ENCODE measurements at regions of chr6 and their contacts with region 1.

Region 1: GRCh38 chr6:33118525-33119123 is 42.8 kb downstream of the HLA-DPB1 start:
- DNase-seq: peak in 1 of 2 experiments; percentile 59
- H3K4me3 ChIP-seq: peak overlapping the region; percentile 82 to 96 (median 92)
- H3K27ac ChIP-seq: peak overlapping the region; percentile 98
- H3K4me1 ChIP-seq: peaks cover 2 to 21% (median 9%) of the 10 kb centered on the region in 4 experiments; a peak in 6 of 7 replicates
- H3K27me3 ChIP-seq: no peaks in the 10 kb centered on the region
- CTCF ChIP-seq: peak in 2 of 3 experiments; percentile 26 to 69; a peak in 2 of 4 replicates
- EP300 ChIP-seq: no peak
- POLR2A ChIP-seq: 0 out of 3 replicates have a peak, but pooled peaks of 1 of the 2 experiments have one; percentile 17
- RAD21 ChIP-seq: peak; percentile 44

Region 2: GRCh38 chr6:33008944-33009861 is 109.4 kb before region 1 on chr6 and contains the start of gene HLA-DOA:
- CTCF ChIA-PET with region 1: interaction called, 20 read pairs
- POLR2A ChIA-PET with region 1: interaction called, 13 read pairs
- DNase-seq: peak; percentile 69 to 77
- H3K4me3 ChIP-seq: peak within 1 kb of the TSS; percentile 68 to 86 (median 74)
- H3K27ac ChIP-seq: peak within 1 kb of the TSS; percentile 22; the same call in 1 of the 2 replicates
- H3K4me1 ChIP-seq: peaks cover 5 to 10% (median 6%) of the 10 kb centered on the region in 4 experiments
- H3K27me3 ChIP-seq: no peaks in the 10 kb centered on the region
- CTCF ChIP-seq: no peak
- EP300 ChIP-seq: no peak
- POLR2A ChIP-seq: peak in 1 of 2 experiments; percentile 71; a peak in 2 of 3 replicates
- RAD21 ChIP-seq: no peak
- total RNA-seq, gene HLA-DOA: 23.7 TPM in 2 replicates

Region 3: DNA sequence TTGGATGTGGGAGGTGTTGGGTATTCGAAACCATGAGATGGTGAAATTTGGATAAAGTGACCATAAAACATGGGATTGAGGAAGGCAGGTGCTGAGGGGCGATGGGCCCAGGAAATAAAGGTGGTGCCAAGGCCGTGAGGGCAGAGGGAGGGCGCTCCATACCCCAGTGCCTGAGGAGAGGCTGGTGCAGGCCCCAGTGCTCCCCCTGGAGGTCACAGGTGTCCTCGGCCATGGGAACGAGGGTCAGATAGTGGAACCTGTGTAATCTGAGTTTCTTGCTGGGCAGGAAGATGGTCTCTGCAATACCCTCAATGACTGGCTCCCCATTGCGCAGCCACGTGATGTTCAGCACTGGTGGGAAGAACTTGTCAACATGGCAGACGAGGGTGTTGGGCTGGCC is 26.7 kb before region 1 on chr6:
- CTCF ChIA-PET with region 1: interaction called, 5 read pairs
- POLR2A ChIA-PET with region 1: interaction called, 17 read pairs
- DNase-seq: peak in 1 of 2 experiments; percentile 91
- H3K4me3 ChIP-seq: no peak overlapping the region
- H3K27ac ChIP-seq: no peak overlapping the region
- H3K4me1 ChIP-seq: peaks cover 0 to 2% (median 0%) of the 10 kb centered on the region in 4 experiments; a peak in 1 of 7 replicates
- H3K27me3 ChIP-seq: no peaks in the 10 kb centered on the region
- CTCF ChIP-seq: peak; percentile 97 to 99 (median 99)
- EP300 ChIP-seq: no peak
- POLR2A ChIP-seq: no peak
- RAD21 ChIP-seq: peak; percentile 74 to 79

Region 4: DNA sequence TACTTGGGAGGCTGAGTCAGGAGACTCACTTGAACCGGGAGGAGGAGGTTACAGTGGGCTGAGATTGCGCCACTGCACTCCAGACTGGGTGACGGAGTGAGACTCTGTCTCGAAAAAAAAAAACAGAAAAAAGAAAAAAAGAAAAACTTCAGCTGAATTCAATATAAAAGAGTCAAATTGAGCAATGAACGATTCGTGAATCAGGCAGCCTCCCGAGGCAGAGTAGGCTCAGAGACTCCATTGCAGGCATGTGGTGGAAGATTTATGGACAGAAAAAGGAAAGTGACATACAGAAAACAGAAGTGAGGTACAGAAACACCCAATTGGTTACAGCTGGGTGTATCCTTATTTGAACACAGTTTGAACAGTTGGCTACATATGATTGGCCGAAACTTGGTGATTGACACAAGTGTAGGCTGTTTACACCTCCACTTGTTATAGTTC is 13.5 kb after region 1 on chr6:
- CTCF ChIA-PET with region 1: interaction called, 63 read pairs
- POLR2A ChIA-PET with region 1: interaction called, 39 read pairs
- DNase-seq: no peak
- H3K4me3 ChIP-seq: no peak overlapping the region
- H3K27ac ChIP-seq: no peak overlapping the region
- H3K4me1 ChIP-seq: no peaks in the 10 kb centered on the region
- H3K27me3 ChIP-seq: no peaks in the 10 kb centered on the region
- CTCF ChIP-seq: no peak
- EP300 ChIP-seq: no peak
- POLR2A ChIP-seq: no peak
- RAD21 ChIP-seq: no peak

Region 5: GRCh38 chr6:33147807-33148666 is 29.4 kb after region 1 on chr6:
- CTCF ChIA-PET with region 1: interaction called, 55 read pairs
- POLR2A ChIA-PET with region 1: interaction called, 13 read pairs
- DNase-seq: no peak
- H3K4me3 ChIP-seq: no peak overlapping the region
- H3K27ac ChIP-seq: no peak overlapping the region
- H3K4me1 ChIP-seq: peaks cover 0 to 2% (median 0%) of the 10 kb centered on the region in 4 experiments; a peak in 1 of 7 replicates
- H3K27me3 ChIP-seq: no peaks in the 10 kb centered on the region
- CTCF ChIP-seq: peak in 2 of 3 experiments; percentile 61 to 72; a peak in 3 of 4 replicates
- EP300 ChIP-seq: no peak
- POLR2A ChIP-seq: no peak
- RAD21 ChIP-seq: peak; percentile 75 to 80

Region 6: DNA sequence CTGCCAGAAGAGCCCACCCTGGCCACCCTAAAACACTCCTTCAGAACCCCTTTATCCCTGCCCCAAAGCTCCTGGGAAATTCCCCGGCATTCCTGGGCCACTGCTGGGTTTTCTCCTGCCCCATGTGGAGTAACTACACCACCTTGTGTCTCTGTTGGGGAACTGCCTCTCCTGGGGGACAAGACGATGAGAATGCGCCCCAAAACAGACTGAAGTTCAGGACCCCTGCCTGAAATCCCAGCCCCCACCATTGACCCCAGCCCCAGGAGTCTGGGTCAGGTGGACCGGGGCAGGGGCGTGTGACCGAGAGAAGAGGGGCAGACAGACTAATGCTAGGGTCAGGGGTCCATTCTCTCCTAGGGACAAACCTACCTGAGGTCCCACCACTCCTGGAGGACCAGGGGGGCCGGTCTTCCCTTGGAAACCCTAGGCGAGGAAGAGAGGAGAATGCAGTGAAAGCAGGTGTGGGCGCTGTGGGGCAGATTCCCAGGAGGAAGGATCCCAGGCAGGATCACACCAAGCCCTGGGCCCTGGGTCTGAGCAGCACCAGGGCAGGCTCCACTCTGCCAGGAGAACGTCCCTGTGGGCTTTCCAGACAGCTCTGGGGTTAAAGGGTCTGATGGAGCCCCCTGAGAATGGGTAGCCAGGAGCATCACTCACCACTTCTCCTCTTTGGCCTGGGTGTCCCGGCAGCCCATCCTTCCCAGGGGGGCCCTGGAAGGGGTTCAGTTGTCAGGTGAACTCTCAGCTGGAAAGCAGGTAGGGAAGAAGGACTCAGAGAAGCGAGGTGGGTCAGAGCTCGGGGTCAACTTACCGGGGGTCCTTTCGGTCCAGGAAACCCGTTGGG is 54.3 kb after region 1 on chr6:
- CTCF ChIA-PET with region 1: interaction called, 12 read pairs
- POLR2A ChIA-PET with region 1: interaction called, 17 read pairs
- DNase-seq: peak in 1 of 2 experiments; percentile 72
- H3K4me3 ChIP-seq: no peak overlapping the region
- H3K27ac ChIP-seq: no peak overlapping the region
- H3K4me1 ChIP-seq: no peaks in the 10 kb centered on the region; a peak in 2 of 7 replicates
- H3K27me3 ChIP-seq: no peaks in the 10 kb centered on the region
- CTCF ChIP-seq: peak in 2 of 3 experiments; percentile 87 to 93; a peak in 3 of 4 replicates
- EP300 ChIP-seq: no peak
- POLR2A ChIP-seq: no peak
- RAD21 ChIP-seq: peak; percentile 93 to 97

Region 7: DNA sequence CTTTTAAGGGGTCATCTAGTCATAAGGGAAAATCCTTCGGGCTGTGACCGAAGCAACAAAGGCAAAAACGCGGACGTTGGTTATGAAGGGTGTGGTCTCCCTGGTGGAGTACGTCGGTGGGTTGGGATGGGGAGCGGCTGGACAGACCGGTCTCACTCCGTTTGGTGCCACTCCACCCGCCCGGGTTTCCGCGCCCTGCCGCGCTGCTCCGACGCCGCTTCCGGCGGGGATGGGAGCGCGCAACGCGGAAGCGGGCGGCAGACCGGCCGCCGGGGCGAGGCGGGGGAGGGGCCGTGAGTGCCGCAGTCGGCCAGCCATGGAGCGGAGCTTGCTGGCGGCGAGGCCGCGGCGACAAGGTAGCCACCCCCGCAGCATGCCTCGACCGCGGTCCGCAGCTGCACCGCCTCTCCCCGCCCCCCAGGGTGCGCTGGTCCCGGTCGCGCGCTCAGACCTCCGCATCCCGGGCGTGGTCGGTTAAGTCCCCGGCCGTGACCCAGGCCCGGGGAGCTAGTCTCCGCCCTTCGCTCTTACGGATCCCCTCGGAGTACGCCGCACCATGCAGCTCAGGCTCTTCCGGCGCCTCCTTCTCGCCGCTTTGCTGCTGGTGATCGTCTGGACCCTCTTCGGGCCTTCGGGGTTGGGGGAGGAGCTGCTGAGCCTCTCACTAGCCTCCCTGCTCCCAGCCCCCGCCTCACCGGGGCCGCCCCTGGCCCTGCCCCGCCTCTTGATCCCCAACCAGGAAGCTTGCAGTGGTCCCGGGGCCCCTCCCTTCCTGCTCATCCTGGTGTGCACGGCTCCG is 158.4 kb after region 1 on chr6 and contains the start of gene B3GALT4:
- CTCF ChIA-PET with region 1: interaction called, 4 read pairs
- POLR2A ChIA-PET with region 1: interaction called, 12 read pairs
- DNase-seq: peak; percentile 86 to 89
- H3K4me3 ChIP-seq: peak within 1 kb of the TSS; percentile 52 to 81 (median 59)
- H3K27ac ChIP-seq: peak within 1 kb of the TSS; percentile 55; the same call in 1 of the 2 replicates
- H3K4me1 ChIP-seq: peaks cover 3 to 35% (median 12%) of the 10 kb centered on the region in 4 experiments
- H3K27me3 ChIP-seq: no peaks in the 10 kb centered on the region
- CTCF ChIP-seq: peak in 2 of 3 experiments; percentile 40 to 62; a peak in 2 of 4 replicates
- EP300 ChIP-seq: 0 out of 3 replicates have a peak, but pooled peaks of 1 of the 2 experiments have one; percentile 23
- POLR2A ChIP-seq: peak in 1 of 2 experiments; percentile 93; a peak in 2 of 3 replicates
- RAD21 ChIP-seq: 0 out of 4 replicates have a peak, but pooled peaks of 1 of the 2 experiments have one; percentile 19
- total RNA-seq, gene B3GALT4: 3.0 and 4.2 TPM in 2 replicates

Measured in H1 (cell line).